Panc1 (cell line): ENCODE measurements at regions of chr6 and their contacts with region 1.

Region 1: GRCh38 chr6:21634582-21634981 is 41.0 kb downstream of the SOX4 start:
- DNase-seq: peak; percentile 84
- ATAC-seq: peak; percentile 92
- H3K4me3 ChIP-seq: no peak overlapping the region
- H3K27ac ChIP-seq: peak overlapping the region; percentile 58; the same call in 1 of the 2 replicates
- H3K4me1 ChIP-seq: no peaks in the 10 kb centered on the region
- H3K27me3 ChIP-seq: no peaks in the 10 kb centered on the region
- CTCF ChIP-seq: no peak

Region 2: DNA sequence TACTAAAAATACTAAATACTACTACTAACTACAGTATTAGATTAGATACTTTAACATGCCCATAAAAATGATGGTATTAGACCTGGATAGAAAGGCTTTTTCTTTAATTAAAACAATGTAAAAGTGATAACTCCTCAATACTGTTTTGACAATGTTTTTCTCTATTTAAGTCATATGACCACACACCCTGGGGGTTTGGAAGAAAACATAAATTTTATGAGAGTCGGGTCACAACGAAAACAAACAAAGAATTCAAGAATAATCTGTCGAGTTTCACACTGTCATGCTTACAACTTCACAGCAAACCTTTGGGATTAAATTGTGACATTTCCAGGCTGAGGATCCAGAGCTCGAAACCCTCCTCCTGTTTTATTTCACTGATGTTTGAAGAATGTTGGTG is 148.5 kb before region 1 on chr6:
- CTCF ChIA-PET with region 1: no interaction called
- POLR2A ChIA-PET with region 1: no interaction called
- in situ Hi-C with region 1: no loop called
- intact Hi-C with region 1: no loop called
- DNase-seq: no peak
- ATAC-seq: no peak
- H3K4me3 ChIP-seq: no peak overlapping the region
- H3K27ac ChIP-seq: no peak overlapping the region
- H3K4me1 ChIP-seq: no peaks in the 10 kb centered on the region
- H3K27me3 ChIP-seq: no peaks in the 10 kb centered on the region
- CTCF ChIP-seq: no peak

Region 3: GRCh38 chr6:21664314-21665109 is 29.9 kb after region 1 on chr6:
- CTCF ChIA-PET with region 1: no interaction called
- POLR2A ChIA-PET with region 1: interaction called, 10 read pairs
- in situ Hi-C with region 1: no loop called
- intact Hi-C with region 1: no loop called
- DNase-seq: no peak
- ATAC-seq: peak; percentile 63
- H3K4me3 ChIP-seq: peak overlapping the region; percentile 33 to 78
- H3K27ac ChIP-seq: no peak overlapping the region; the same call in 1 of the 2 replicates
- H3K4me1 ChIP-seq: no peaks in the 10 kb centered on the region; the same call in none of the 2 replicates
- H3K27me3 ChIP-seq: no peaks in the 10 kb centered on the region
- CTCF ChIP-seq: no peak

Region 4: GRCh38 chr6:21831521-21832291 is 197.1 kb after region 1 on chr6:
- CTCF ChIA-PET with region 1: no interaction called
- POLR2A ChIA-PET with region 1: interaction called, 18 read pairs
- in situ Hi-C with region 1: no loop called
- intact Hi-C with region 1: no loop called
- DNase-seq: no peak
- ATAC-seq: no peak
- H3K4me3 ChIP-seq: no peak overlapping the region
- H3K27ac ChIP-seq: peak overlapping the region; percentile 25; the same call in 1 of the 2 replicates
- H3K4me1 ChIP-seq: peaks cover 6% of the 10 kb centered on the region; the same call in 1 of the 2 replicates
- H3K27me3 ChIP-seq: no peaks in the 10 kb centered on the region
- CTCF ChIP-seq: no peak

Region 5: DNA sequence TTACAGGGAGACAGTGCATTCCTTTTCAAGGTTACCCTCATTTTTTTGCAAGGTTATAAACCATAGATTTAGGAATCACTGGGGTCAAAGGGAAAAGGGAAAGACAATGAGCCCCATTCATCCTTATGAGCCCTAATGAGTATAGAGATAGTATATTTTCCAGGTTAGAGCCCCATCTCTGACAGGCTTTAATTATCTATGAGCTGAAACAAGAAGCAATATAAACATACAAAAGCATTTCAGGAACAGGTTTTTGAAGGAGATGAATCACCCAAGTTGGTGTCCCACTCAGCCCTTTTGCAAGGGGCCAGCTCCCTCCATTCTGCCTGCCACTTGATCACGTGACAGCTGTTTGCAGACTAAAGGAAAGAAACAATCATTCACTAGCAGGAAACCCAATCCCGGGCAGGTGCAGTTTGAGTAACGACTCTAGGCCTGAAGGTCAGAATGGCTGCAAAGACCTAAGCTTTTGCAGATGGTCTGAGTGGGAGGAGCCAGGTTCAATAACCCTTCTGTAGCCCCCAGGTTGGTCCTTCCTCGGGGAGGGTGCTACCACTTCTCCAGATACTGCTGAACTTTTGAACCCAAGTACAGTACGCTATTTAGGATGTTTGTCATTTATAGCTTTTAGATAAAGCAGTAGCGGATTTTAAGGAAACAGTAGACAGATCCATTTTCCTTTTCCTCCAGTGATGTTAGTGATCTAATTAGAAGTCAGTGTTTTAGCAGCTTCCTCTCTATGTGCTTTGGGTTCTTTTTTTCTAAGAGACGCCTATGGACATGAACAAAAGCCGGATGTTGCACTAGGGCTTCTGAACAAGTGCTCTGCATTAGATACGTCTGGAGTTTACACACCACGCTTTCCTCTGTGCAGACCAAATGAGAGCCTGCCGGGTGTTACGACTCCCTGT is 212.2 kb after region 1 on chr6:
- CTCF ChIA-PET with region 1: no interaction called
- POLR2A ChIA-PET with region 1: no interaction called
- in situ Hi-C with region 1: no loop called
- intact Hi-C with region 1: no loop called
- DNase-seq: no peak
- ATAC-seq: no peak
- H3K4me3 ChIP-seq: no peak overlapping the region
- H3K27ac ChIP-seq: no peak overlapping the region
- H3K4me1 ChIP-seq: no peaks in the 10 kb centered on the region
- H3K27me3 ChIP-seq: no peaks in the 10 kb centered on the region
- CTCF ChIP-seq: no peak